Ascending aorta (tissue), 2 donors: ENCODE measurements at regions of chr2 and their contacts with region 1.

Region 1: DNA sequence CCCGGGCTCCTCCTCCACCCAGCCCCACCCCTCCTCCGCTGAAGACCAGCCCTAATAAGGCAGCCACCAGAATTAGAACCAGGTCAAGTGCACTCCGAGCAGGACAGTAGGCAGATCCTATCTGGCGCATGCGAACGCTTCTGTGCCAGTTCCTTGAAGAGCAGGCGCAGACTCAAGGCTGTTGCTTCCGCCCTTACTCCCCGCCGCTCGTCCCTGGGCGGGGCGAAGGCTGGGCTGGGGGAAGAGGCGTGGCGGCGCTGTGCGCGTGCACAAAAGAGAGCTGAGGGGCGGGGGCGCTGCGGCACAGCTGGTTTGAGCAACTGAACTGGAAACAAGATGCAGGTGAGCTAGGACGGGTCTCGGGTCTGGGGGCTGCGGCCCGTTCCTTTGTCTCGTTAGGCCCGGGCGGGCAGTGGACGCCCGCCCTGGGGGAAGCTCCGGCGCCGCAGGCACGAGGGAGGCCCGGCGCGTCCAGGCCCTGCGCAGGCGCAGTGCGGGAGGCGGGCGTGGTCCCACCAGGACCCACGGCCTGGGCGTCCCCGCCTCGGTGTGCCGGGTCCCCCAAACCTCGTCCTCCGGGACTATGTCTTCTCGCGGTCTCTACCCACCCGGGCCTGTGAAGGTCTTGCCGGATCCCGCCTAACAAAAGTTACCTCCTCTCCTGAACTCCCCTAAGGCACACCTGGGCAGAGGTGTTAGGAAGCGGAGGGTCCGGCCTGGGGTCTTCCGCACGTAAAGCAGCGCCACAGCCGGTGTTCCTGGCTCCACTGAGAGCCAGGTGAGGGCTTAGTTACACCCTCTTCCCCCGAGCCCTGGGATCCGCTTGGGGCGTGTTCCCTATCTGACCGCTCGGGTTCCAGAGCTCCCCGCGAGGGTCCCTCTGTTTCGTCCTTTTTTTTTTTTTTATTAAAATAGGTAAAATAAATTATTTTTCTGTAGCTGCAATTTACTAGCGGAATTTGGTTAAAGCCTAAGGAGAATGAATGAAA is at the start of gene PDCL3:
- DNase-seq: peak; percentile 95 to 99
- H3K4me3 ChIP-seq: peak within 1 kb of the TSS; percentile 79 to 84
- H3K27ac ChIP-seq: peak within 1 kb of the TSS; percentile 79 to 85
- H3K4me1 ChIP-seq: peaks cover 0 to 9% of the 10 kb centered on the region in 2 donors
- H3K27me3 ChIP-seq: no peaks in the 10 kb centered on the region
- CTCF ChIP-seq: peak in 1 of 3 experiments; percentile 23
- total RNA-seq, gene PDCL3: 8.1 TPM

Region 2: DNA sequence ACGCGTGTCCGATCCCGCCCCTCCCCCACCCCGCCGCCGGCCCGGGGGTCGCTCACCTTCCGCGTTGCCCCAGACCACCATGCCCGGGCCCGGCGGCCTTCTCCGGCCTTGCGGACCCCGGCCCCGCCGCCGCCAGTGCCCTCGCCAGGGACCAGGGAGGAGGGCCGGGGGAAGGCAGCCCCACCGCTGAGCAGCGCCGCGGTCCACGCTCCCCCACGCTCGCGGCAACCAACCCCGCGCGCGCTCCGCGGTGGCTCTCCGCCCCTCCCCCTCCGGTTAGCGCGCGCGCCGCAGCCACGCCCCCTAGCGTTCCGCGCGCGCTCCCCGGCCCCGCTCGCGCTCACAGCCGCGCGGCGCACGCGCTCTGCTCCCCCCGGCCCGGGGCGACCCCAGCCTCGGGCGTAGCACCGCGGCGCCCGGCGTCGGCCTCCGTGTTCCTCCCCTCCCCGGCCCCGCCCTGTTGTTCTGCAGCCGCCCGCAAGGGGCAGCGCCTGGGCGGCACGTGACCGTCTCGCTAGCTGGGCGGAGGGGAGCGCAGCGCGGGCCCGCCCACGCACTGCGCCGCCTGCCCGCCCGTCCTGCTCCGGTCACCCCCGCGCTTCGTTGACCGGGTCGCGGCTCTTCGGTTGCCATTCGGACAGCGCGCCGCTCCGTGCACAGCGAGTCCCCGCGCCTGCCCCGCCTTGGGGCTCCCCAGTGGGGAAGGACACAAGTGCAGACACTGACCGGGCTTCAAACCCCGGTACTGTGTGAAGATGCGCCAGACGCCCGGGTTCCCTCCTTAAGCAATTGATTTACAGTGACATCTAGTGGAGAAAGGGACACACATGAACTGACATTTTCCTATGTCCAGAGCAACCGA is 1073.0 kb before region 1 on chr2 and contains the start of gene REV1:
- intact Hi-C with region 1: loop called (anchors 10 kb)
- DNase-seq: peak; percentile 70 to 95
- H3K4me3 ChIP-seq: peak within 1 kb of the TSS; percentile 99 to 100
- H3K27ac ChIP-seq: peak within 1 kb of the TSS; percentile 89 to 99
- H3K4me1 ChIP-seq: peaks cover 0 to 14% of the 10 kb centered on the region in 2 donors
- H3K27me3 ChIP-seq: no peaks in the 10 kb centered on the region
- CTCF ChIP-seq: peak; percentile 74 to 91 (median 80)
- total RNA-seq, gene REV1: 26.8 TPM

Region 3: GRCh38 chr2:100606726-100607343 is 43.8 kb after region 1 on chr2:
- intact Hi-C with region 1: loop called (anchors 2 kb)
- DNase-seq: peak in 1 of 2 donors; percentile 66
- H3K4me3 ChIP-seq: no peak overlapping the region
- H3K27ac ChIP-seq: no peak overlapping the region
- H3K4me1 ChIP-seq: peaks cover 5 to 10% of the 10 kb centered on the region in 2 donors
- H3K27me3 ChIP-seq: no peaks in the 10 kb centered on the region
- CTCF ChIP-seq: peak; percentile 58 to 79 (median 73)

Region 4: DNA sequence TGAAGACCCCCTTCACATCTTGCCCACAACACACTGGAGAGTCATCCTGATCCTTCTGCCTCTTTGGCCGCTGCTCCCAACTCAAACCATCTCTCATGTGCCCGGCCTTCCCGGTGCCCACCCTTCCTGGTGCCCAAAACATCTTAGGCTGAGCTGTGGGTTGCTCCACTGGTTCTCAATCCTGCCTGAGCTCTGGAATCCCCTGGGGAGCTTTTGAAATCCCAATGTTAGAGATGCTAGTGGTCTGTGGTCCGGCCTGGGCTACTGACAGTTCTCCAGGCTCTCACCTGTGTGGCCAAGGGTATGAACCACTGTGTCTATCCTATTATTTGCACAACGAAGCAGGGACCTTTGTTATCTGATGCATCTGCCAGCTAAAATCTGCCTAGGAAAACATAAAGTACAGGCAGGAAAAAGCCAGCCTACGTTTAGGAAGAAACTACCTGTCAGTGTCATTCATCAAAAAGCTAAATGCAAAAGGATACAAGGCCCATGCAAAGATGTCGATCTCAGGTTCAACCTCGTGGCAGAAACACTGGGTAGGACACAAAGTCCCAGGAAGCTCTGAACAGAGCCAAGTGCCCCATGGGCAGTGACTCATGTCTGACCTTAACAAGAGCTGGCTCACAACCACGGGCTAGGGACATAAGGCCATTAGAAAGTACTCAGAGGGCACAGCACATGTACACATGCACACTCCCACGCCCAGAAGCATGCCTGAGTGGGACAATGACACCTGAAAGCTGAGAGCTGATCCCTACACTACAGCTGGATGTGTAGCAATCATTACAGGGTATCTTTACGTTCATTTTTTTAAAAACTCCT is 557.4 kb after region 1 on chr2:
- intact Hi-C with region 1: loop called (anchors 10 kb)
- DNase-seq: peak; percentile 87 to 95
- H3K4me3 ChIP-seq: no peak overlapping the region
- H3K27ac ChIP-seq: peak overlapping the region; percentile 80 to 84
- H3K4me1 ChIP-seq: peaks cover 8 to 47% of the 10 kb centered on the region in 2 donors
- H3K27me3 ChIP-seq: no peaks in the 10 kb centered on the region
- CTCF ChIP-seq: no peak